Common myeloid progenitor, CD34-positive (primary cell): ENCODE measurements at regions of chr1 and their contacts with region 1.

Region 1: GRCh38 chr1:207579436-207579799 is 65.5 kb upstream of the CR1L start:
- DNase-seq: peak; percentile 54 to 66 (median 63)
- H3K4me3 ChIP-seq: no peak overlapping the region
- H3K27ac ChIP-seq: no peak overlapping the region
- H3K4me1 ChIP-seq: no peaks in the 10 kb centered on the region
- H3K27me3 ChIP-seq: no peaks in the 10 kb centered on the region

Region 2: GRCh38 chr1:207619871-207620542 is 40.6 kb after region 1 on chr1:
- CTCF ChIA-PET with region 1: interaction called, 10 read pairs
- POLR2A ChIA-PET with region 1: no interaction called
- DNase-seq: peak; percentile 69 to 93 (median 86)
- H3K4me3 ChIP-seq: no peak overlapping the region
- H3K27ac ChIP-seq: no peak overlapping the region
- H3K4me1 ChIP-seq: peaks cover 0 to 16% (median 4%) of the 10 kb centered on the region in 4 experiments
- H3K27me3 ChIP-seq: no peaks in the 10 kb centered on the region

Region 3: GRCh38 chr1:207672522-207673130 is 93.2 kb after region 1 on chr1:
- CTCF ChIA-PET with region 1: interaction called, 31 read pairs
- POLR2A ChIA-PET with region 1: no interaction called
- DNase-seq: peak; percentile 75 to 87 (median 77)
- H3K4me3 ChIP-seq: no peak overlapping the region
- H3K27ac ChIP-seq: no peak overlapping the region
- H3K4me1 ChIP-seq: peaks cover 0 to 25% (median 11%) of the 10 kb centered on the region in 4 experiments
- H3K27me3 ChIP-seq: peaks cover 10 to 32% (median 14%) of the 10 kb centered on the region in 5 experiments